Endothelial cell of umbilical vein (primary cell): ENCODE measurements at regions of chr10 and their contacts with region 1.

Region 1: GRCh38 chr10:123582084-123582989 is 83.8 kb upstream of the GPR26 start:
- DNase-seq: peak; percentile 69
- H3K4me3 ChIP-seq: no peak overlapping the region
- H3K27ac ChIP-seq: no peak overlapping the region
- H3K4me1 ChIP-seq: no peaks in the 10 kb centered on the region
- H3K27me3 ChIP-seq: peaks cover 0 to 1% of the 10 kb centered on the region in 2 experiments
- CTCF ChIP-seq: peak; percentile 83 to 89
- POLR2A ChIP-seq: no peak

Region 2: GRCh38 chr10:123462756-123463155 is 119.6 kb before region 1 on chr10:
- CTCF ChIA-PET with region 1: no interaction called
- POLR2A ChIA-PET with region 1: no interaction called
- dilution Hi-C with region 1: no loop called
- intact Hi-C with region 1: no loop called
- DNase-seq: no peak
- H3K4me3 ChIP-seq: no peak overlapping the region
- H3K27ac ChIP-seq: no peak overlapping the region
- H3K4me1 ChIP-seq: no peaks in the 10 kb centered on the region
- H3K27me3 ChIP-seq: no peaks in the 10 kb centered on the region
- CTCF ChIP-seq: no peak
- POLR2A ChIP-seq: no peak

Region 3: DNA sequence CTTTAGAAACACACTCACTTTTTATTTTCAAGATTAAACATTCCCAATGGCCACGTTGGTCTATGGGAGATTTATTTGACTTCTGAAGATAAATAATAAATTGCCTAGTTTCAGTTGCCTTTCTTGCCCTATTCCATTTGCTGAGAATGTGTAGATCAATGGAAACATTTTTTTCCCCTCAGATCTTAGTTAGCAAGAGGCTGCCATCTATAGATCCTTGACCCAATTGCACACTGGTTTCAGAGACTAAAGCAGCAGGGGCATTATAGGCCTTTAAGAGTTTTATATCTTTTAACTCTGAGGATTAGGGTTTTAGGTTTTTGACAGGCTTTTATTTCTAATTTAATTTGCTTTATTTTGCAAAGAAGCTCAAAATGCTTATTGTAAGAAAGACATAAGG is 79.4 kb before region 1 on chr10:
- CTCF ChIA-PET with region 1: no interaction called
- POLR2A ChIA-PET with region 1: no interaction called
- dilution Hi-C with region 1: no loop called
- intact Hi-C with region 1: no loop called
- DNase-seq: no peak
- H3K4me3 ChIP-seq: no peak overlapping the region
- H3K27ac ChIP-seq: no peak overlapping the region
- H3K4me1 ChIP-seq: no peaks in the 10 kb centered on the region
- H3K27me3 ChIP-seq: no peaks in the 10 kb centered on the region
- CTCF ChIP-seq: no peak
- POLR2A ChIP-seq: no peak

Region 4: GRCh38 chr10:123865880-123866279 is 283.5 kb after region 1 on chr10:
- CTCF ChIA-PET with region 1: no interaction called
- POLR2A ChIA-PET with region 1: no interaction called
- dilution Hi-C with region 1: no loop called
- intact Hi-C with region 1: loop called (anchors 1 kb)
- DNase-seq: no peak
- H3K4me3 ChIP-seq: no peak overlapping the region
- H3K27ac ChIP-seq: no peak overlapping the region
- H3K4me1 ChIP-seq: no peaks in the 10 kb centered on the region
- H3K27me3 ChIP-seq: no peaks in the 10 kb centered on the region
- CTCF ChIP-seq: no peak
- POLR2A ChIP-seq: no peak

Region 5: DNA sequence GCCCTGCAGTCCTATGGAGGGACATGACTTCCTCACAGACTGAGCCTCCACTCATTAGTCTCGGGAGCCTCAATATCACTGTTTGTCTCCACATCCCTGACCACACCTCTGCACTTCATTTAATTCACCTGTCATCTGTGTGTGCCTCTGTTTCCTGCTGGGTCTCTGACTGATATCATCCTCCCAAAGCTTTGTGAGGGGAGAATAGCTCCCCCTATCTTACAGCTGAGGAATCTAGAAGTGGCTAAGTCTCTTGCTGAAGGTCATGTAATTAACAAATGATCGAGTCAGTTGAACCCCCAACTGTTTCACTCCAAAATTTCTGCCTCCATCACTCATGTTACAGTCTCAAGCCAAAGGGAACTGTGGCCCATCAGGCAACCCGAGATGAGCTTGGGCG is 314.8 kb after region 1 on chr10:
- CTCF ChIA-PET with region 1: interaction called, 3 read pairs
- POLR2A ChIA-PET with region 1: no interaction called
- dilution Hi-C with region 1: no loop called
- intact Hi-C with region 1: loop called (anchors 1 kb)
- DNase-seq: no peak
- H3K4me3 ChIP-seq: no peak overlapping the region
- H3K27ac ChIP-seq: no peak overlapping the region
- H3K4me1 ChIP-seq: no peaks in the 10 kb centered on the region
- H3K27me3 ChIP-seq: peaks cover 0 to 1% of the 10 kb centered on the region in 2 experiments
- CTCF ChIP-seq: peak in 1 of 2 donors; percentile 27
- POLR2A ChIP-seq: no peak

Region 6: DNA sequence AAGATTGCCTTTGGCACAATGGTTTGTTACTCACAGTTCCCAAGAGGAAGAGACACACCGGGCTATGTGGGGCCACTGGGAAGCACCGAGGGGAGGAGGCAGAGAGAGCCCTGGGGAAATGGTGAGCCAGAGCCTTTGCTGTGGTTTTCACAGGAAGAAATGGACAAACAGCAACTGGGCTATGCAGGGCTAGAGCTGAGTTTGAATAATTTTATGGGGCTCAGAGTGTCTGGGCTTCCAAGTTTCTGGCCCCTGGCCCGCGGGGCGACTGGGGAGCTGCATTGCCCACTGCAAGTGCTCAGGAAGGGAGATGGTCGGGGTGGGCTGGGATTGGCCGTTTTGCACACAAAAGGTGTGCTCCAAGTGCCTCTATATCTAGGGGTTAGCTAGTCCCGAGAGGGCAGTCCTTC is 418.5 kb after region 1 on chr10:
- CTCF ChIA-PET with region 1: no interaction called
- POLR2A ChIA-PET with region 1: no interaction called
- dilution Hi-C with region 1: no loop called
- intact Hi-C with region 1: no loop called
- DNase-seq: no peak
- H3K4me3 ChIP-seq: no peak overlapping the region
- H3K27ac ChIP-seq: no peak overlapping the region
- H3K4me1 ChIP-seq: no peaks in the 10 kb centered on the region
- H3K27me3 ChIP-seq: no peaks in the 10 kb centered on the region
- CTCF ChIP-seq: no peak
- POLR2A ChIP-seq: no peak

Region 7: GRCh38 chr10:124403548-124403947 is 821.2 kb after region 1 on chr10:
- CTCF ChIA-PET with region 1: interaction called, 5 read pairs
- POLR2A ChIA-PET with region 1: no interaction called
- dilution Hi-C with region 1: no loop called
- intact Hi-C with region 1: loop called (anchors 2 kb)
- DNase-seq: peak; percentile 85
- H3K4me3 ChIP-seq: no peak overlapping the region
- H3K27ac ChIP-seq: no peak overlapping the region
- H3K4me1 ChIP-seq: no peaks in the 10 kb centered on the region
- H3K27me3 ChIP-seq: no peaks in the 10 kb centered on the region
- CTCF ChIP-seq: peak; percentile 60 to 64
- POLR2A ChIP-seq: no peak